ENCODE measurements at regions of chr5 and their contacts with region 1.

Region 1: GRCh38 chr5:137743031-137743640 is 7.2 kb upstream of the KLHL3 start:
- DNase-seq: peak; percentile 61
- H3K4me3 Mint-ChIP-seq: no peak overlapping the region
- H3K27ac Mint-ChIP-seq: no peak overlapping the region
- H3K4me1 Mint-ChIP-seq: peaks cover 8% of the 10 kb centered on the region
- H3K27me3 Mint-ChIP-seq: no peaks in the 10 kb centered on the region

Region 2: GRCh38 chr5:137629646-137630045 is 113.5 kb before region 1 on chr5:
- CTCF ChIA-PET with region 1: interaction called, 102 read pairs
- POLR2A ChIA-PET with region 1: interaction called, 5 read pairs
- DNase-seq: no peak
- H3K4me3 Mint-ChIP-seq: no peak overlapping the region
- H3K27ac Mint-ChIP-seq: no peak overlapping the region
- H3K4me1 Mint-ChIP-seq: no peaks in the 10 kb centered on the region
- H3K27me3 Mint-ChIP-seq: no peaks in the 10 kb centered on the region

Region 3: GRCh38 chr5:137665678-137666460 is 77.3 kb before region 1 on chr5:
- CTCF ChIA-PET with region 1: interaction called, 254 read pairs
- POLR2A ChIA-PET with region 1: interaction called, 20 read pairs
- DNase-seq: peak; percentile 63
- H3K4me3 Mint-ChIP-seq: no peak overlapping the region
- H3K27ac Mint-ChIP-seq: peak overlapping the region; percentile 17
- H3K4me1 Mint-ChIP-seq: peaks cover 22% of the 10 kb centered on the region
- H3K27me3 Mint-ChIP-seq: no peaks in the 10 kb centered on the region

Measured in activated CD4-positive, alpha-beta memory T cell treated with anti-CD3 and anti-CD28 coated beads, Interleukin-2, amount 10 ng/mL, durations not matched to agents 7 days and 5 days (primary cell).